Thyroid gland (tissue), 4 donors: ENCODE measurements at regions of chr1 and their contacts with region 1.

Region 1: DNA sequence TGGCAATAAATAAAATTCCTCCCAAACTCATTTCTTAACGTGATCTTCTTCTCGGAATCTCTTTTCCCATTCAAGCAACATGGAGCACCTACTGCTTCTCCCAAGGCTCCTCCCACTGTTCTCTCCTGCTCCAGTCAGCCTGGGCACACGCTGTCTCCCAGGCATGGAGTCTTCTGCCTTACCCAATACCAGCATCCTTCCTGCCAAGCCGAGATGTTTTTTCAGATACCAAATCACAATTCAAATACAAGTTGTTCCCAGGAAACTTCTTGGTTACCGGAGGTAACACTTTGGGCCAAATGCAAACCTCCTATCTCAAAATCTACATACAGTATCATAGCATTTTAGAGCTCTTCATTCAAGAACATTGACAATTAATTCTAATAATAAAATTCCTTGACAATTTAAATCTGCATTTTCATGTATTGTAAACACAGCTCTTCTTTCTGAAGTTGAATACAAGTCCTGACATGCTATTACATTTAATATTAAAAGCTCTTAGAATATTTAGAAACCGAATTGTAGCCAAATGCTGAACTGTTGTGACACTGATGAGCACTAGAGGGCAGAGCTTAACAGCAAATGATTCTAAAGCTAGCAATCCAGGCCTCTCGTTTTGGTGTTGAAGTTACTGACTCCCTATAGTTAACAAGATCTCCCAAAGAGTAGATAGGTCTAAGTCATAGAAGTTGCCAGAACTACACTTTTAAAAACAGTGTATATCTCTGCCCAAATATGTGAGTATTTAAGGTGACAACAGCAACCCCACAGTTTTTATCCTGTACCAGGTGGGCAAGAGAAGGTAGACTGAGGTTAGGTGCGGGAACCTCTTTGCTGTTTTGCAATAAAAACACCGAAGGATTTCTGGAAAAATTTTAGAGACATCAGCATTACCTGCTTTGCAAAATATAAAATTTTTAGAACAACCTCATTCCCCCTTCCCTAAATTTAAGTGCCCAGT is 52.3 kb downstream of the BCAR3 start:
- DNase-seq: peak; percentile 38 to 44
- H3K4me3 ChIP-seq: no peak overlapping the region
- H3K27ac ChIP-seq: no peak overlapping the region
- H3K4me1 ChIP-seq: peaks cover 3 to 6% of the 10 kb centered on the region in 2 donors
- H3K27me3 ChIP-seq: no peaks in the 10 kb centered on the region
- CTCF ChIP-seq: peak; percentile 29 to 95 (median 76)
- POLR2A ChIP-seq: no peak

Region 2: GRCh38 chr1:93437976-93438605 is 191.3 kb before region 1 on chr1:
- intact Hi-C with region 1: loop called (anchors 5 kb)
- DNase-seq: no peak
- H3K4me3 ChIP-seq: no peak overlapping the region
- H3K27ac ChIP-seq: no peak overlapping the region
- H3K4me1 ChIP-seq: no peaks in the 10 kb centered on the region
- H3K27me3 ChIP-seq: no peaks in the 10 kb centered on the region
- CTCF ChIP-seq: peak; percentile 27 to 85 (median 56)
- POLR2A ChIP-seq: no peak

Region 3: DNA sequence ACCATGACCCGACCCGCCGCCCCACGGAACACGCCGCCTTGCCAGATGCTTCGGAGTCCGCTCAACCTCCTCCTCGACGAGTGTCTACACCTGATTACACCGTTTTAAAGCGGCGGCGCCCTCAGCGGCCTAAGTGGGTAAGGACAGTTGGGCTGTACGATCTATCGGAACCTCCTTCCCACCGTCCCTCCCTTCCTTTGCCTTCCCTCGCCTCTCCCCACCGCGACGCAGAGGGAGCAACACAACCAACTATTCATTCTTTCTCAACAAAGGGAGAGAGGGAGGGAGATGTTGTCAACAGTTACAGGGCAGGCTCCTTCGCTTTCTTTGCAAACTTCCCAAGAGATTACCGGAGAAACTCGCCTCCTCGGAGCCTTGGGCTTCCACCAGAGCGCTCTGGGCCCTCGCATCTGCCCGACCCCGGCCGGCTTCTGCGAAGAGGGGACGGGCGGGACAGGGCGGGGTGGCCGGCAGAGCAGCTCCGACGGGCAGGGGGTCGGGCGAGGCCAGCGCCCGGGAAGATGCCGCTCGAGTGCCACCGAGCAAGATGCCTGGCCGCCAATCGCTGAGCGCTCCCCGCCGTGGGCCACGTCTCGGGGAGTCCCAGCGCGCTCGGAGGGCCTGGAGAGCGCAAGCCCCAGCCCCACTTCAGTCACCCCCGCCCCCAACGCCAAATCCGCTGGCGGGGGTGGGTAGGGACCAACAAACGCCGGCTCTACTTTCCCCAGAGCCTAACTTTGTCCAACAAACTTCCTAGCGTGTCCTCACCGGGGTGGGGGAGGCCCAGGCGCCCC is 51.6 kb after region 1 on chr1:
- intact Hi-C with region 1: loop called (anchors 10 kb)
- DNase-seq: peak; percentile 92 to 95
- H3K4me3 ChIP-seq: peak overlapping the region; percentile 66 to 78 (median 75)
- H3K27ac ChIP-seq: peak overlapping the region; percentile 93 to 97 (median 93)
- H3K4me1 ChIP-seq: peaks cover 5 to 37% of the 10 kb centered on the region in 2 donors
- H3K27me3 ChIP-seq: no peaks in the 10 kb centered on the region
- CTCF ChIP-seq: peak; percentile 41 to 85 (median 71)
- POLR2A ChIP-seq: peak in 1 of 2 donors; percentile 82

Region 4: GRCh38 chr1:93814059-93814794 is 184.8 kb after region 1 on chr1:
- intact Hi-C with region 1: loop called (anchors 5 kb)
- DNase-seq: peak; percentile 65 to 68
- H3K4me3 ChIP-seq: no peak overlapping the region
- H3K27ac ChIP-seq: no peak overlapping the region
- H3K4me1 ChIP-seq: peaks cover 6 to 11% of the 10 kb centered on the region in 2 donors
- H3K27me3 ChIP-seq: no peaks in the 10 kb centered on the region
- CTCF ChIP-seq: peak; percentile 90 to 99 (median 98)
- POLR2A ChIP-seq: no peak

Region 5: GRCh38 chr1:93846211-93846991 is 217.0 kb after region 1 on chr1:
- intact Hi-C with region 1: loop called (anchors 10 kb)
- DNase-seq: peak; percentile 90
- H3K4me3 ChIP-seq: peak overlapping the region; percentile 23 to 78 (median 66)
- H3K27ac ChIP-seq: peak overlapping the region; percentile 96 to 99 (median 97)
- H3K4me1 ChIP-seq: peaks cover 6 to 9% of the 10 kb centered on the region in 2 donors
- H3K27me3 ChIP-seq: no peaks in the 10 kb centered on the region
- CTCF ChIP-seq: peak in 3 of 6 experiments; percentile 35 to 51 (median 39)
- POLR2A ChIP-seq: peak in 1 of 2 donors; percentile 83